Dendritic cell treated with granulocyte-macrophage colony-stimulating factor and Interleukin-4, amounts not matched to agents 40 ng/mL and 50 ng/mL, for 4 days (primary cell): ENCODE measurements at regions of chr11 and their contacts with region 1.

Region 1: GRCh38 chr11:72483412-72484186 is 49.3 kb upstream of the CLPB start:
- H3K4me3 Mint-ChIP-seq: no peak overlapping the region
- H3K27ac Mint-ChIP-seq: peak overlapping the region; percentile 95
- H3K4me1 Mint-ChIP-seq: peaks cover 36% of the 10 kb centered on the region
- H3K27me3 Mint-ChIP-seq: no peaks in the 10 kb centered on the region

Region 2: GRCh38 chr11:72534565-72535547 is 51.3 kb after region 1 on chr11:
- intact Hi-C with region 1: no loop called
- H3K4me3 Mint-ChIP-seq: no peak overlapping the region
- H3K27ac Mint-ChIP-seq: no peak overlapping the region
- H3K4me1 Mint-ChIP-seq: peaks cover 46% of the 10 kb centered on the region
- H3K27me3 Mint-ChIP-seq: peaks cover 47% of the 10 kb centered on the region

Region 3: GRCh38 chr11:72553706-72554105 is 70.1 kb after region 1 on chr11:
- intact Hi-C with region 1: loop called (anchors 1 kb)
- H3K4me3 Mint-ChIP-seq: no peak overlapping the region
- H3K27ac Mint-ChIP-seq: no peak overlapping the region
- H3K4me1 Mint-ChIP-seq: peaks cover 12% of the 10 kb centered on the region
- H3K27me3 Mint-ChIP-seq: peaks cover 46% of the 10 kb centered on the region

Region 4: GRCh38 chr11:72573072-72573854 is 89.7 kb after region 1 on chr11:
- intact Hi-C with region 1: loop called (anchors 5 kb)
- H3K4me3 Mint-ChIP-seq: no peak overlapping the region
- H3K27ac Mint-ChIP-seq: no peak overlapping the region
- H3K4me1 Mint-ChIP-seq: peaks cover 48% of the 10 kb centered on the region
- H3K27me3 Mint-ChIP-seq: peaks cover 29% of the 10 kb centered on the region